Activated naive CD4-positive, alpha-beta T cell treated with anti-CD3 and anti-CD28 coated beads for 36 hours (primary cell): ENCODE measurements at regions of chrX and their contacts with region 1.

Region 1: DNA sequence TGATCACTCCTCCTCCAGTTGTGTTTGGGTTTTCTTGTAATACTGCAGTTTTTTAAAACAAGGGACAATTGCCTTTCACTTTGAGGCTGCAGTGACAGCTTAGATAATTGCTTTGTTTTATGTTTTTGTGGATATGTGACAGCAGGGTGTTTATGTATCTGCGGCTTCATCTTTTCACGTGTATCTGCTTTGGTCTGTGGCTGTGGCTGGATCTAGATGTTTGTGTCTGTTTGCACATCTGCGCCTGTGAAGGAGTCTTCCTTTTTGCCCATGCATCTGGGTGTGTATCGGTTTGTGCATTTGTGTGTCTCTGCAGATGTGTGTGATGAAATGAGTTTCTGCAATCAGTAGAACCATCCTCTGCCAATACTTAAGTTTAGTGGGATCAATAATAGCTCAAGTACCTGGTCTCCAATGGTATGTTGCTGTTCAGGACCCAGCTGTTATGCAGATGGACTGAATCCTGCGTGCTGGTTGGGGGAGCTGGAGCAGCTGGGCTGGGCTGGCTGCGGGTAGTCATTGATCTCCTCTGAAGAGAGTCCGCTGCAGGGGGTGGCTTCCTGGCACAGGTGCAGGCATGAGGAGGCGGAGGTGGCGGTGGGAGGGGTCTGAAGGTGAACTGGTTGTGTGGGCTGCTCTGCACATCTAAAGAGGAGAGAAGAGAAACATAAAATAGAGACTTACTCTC is 390.3 kb downstream of the SH2D1A start:
- DNase-seq: peak; percentile 60
- H3K4me3 Mint-ChIP-seq: peak overlapping the region; percentile 67
- H3K27ac Mint-ChIP-seq: peak overlapping the region; percentile 16
- H3K4me1 Mint-ChIP-seq: peaks cover 41% of the 10 kb centered on the region
- H3K27me3 Mint-ChIP-seq: no peaks in the 10 kb centered on the region

Region 2: GRCh38 chrX:124263743-124264142 is 473.0 kb before region 1 on chrX:
- CTCF ChIA-PET with region 1: no interaction called
- intact Hi-C with region 1: no loop called
- DNase-seq: peak; percentile 17
- H3K4me3 Mint-ChIP-seq: no peak overlapping the region
- H3K27ac Mint-ChIP-seq: no peak overlapping the region
- H3K4me1 Mint-ChIP-seq: peaks cover 10% of the 10 kb centered on the region
- H3K27me3 Mint-ChIP-seq: no peaks in the 10 kb centered on the region

Region 3: DNA sequence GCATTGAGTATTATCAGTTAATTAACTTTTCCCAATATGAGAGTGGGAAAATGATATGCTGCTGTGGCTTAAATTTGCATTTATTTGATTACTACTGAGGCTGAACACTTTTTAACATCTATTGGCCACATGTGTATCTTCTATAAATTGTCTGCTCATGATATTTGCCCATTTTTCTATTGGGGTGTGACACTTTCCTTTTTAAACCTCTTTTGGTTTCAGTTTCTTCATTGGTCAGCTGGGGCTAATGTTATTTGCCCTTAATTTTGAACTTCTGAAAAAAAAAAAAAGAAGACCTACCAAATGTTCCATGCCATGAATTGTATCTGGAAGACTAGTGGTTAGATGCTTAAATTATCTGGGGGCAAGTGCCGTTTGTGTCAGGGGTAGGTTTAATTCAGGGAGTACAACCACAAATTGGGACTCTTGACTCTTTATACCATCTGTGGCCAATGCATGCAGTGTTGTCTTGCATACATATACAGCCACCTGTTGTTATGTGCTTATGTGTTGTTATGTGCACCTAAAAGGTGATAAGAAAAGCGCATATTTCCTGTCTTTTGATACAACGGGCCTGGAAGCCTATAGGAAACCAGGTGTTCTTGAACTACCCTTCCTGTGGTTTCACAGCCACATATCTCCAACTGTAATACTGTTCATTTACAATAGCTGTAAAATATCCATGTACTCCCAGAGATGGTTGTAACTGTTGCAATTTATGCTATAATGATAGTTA is 341.4 kb before region 1 on chrX:
- CTCF ChIA-PET with region 1: no interaction called
- intact Hi-C with region 1: loop called (anchors 5 kb)
- DNase-seq: no peak
- H3K4me3 Mint-ChIP-seq: peak overlapping the region; percentile 29
- H3K27ac Mint-ChIP-seq: no peak overlapping the region
- H3K4me1 Mint-ChIP-seq: peaks cover 27% of the 10 kb centered on the region
- H3K27me3 Mint-ChIP-seq: no peaks in the 10 kb centered on the region

Region 4: DNA sequence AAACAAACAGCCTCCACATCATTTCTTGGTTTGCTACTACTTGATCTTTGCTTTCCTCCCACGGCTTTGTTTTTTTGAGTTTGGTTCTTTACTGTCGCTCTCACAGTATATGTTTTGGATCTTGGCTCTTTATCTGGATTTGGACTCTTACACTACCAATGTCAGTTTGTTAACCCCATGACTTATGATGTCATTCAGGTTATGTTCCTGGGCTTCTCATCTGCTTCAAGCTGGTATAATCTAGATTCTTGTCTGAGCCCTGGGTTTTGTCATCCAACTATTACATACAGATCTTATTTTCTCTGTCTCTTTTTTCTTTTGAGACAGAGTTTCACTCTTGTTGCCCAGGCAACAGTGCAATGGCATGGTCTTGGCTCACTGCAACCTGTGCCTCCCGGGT is 100.1 kb after region 1 on chrX:
- CTCF ChIA-PET with region 1: no interaction called
- intact Hi-C with region 1: no loop called
- DNase-seq: peak; percentile 3
- H3K4me3 Mint-ChIP-seq: peak overlapping the region; percentile 8
- H3K27ac Mint-ChIP-seq: no peak overlapping the region
- H3K4me1 Mint-ChIP-seq: peaks cover 5% of the 10 kb centered on the region
- H3K27me3 Mint-ChIP-seq: no peaks in the 10 kb centered on the region